OCI-LY7 (cell line): ENCODE measurements at regions of chr2 and their contacts with region 1.

Region 1: DNA sequence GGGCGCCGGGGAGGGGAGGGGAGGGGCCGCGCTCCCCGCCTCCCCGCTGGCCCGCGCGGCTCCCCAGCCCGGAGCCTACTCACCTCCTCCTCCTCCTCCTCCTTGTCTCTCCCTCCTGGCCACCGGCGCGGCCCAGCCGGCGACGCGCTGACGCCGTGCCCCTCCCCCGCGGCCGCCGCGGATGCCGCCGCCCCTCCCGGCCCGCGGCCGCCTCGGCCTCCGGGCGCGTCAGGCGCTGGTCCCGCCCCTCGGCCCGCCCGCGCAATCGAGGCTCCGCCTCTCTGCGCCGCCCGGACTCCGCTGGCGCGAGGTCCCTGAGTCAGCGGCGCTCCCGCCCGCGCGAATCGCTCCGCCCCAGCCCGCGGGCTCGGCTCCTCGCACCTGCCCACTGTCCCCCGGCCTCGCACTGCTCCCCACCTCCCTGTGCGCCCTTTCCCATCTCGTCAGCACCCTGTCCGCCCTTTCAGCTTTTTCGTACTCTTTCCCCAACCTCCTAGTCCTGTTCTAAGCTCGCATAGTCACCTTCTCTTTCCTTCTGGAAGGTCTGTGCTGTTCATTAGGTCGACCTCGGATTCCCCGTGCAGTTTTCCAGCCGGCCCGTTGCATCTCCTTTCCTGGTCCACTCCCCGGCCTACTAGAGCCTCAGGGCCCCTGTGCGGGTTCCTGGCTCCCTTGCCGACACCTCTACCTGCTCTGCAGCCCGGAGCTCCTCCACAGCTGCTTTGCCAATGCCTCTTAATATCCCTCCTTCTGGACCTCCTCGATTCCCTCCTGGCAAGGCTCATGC is 187.4 kb downstream of the ZEB2 start:
- DNase-seq: peak; percentile 93
- H3K4me3 ChIP-seq: peak overlapping the region; percentile 97
- H3K27ac ChIP-seq: peak overlapping the region; percentile 68
- H3K4me1 ChIP-seq: peaks cover 26% of the 10 kb centered on the region
- CTCF ChIP-seq: no peak

Region 2: GRCh38 chr2:143128681-143129580 is 1203.6 kb before region 1 on chr2 and contains the start of gene ARHGAP15:
- CTCF ChIA-PET with region 1: no interaction called
- POLR2A ChIA-PET with region 1: no interaction called
- intact Hi-C with region 1: loop called (anchors 10 kb)
- DNase-seq: peak; percentile 91
- H3K4me3 ChIP-seq: peak within 1 kb of the TSS; percentile 76
- H3K27ac ChIP-seq: peak within 1 kb of the TSS; percentile 97
- H3K4me1 ChIP-seq: peaks cover 37% of the 10 kb centered on the region
- CTCF ChIP-seq: peak; percentile 63; the same call in 1 of the 2 replicates
- total RNA-seq, gene ARHGAP15: 98.4 and 115 TPM in 2 replicates

Region 3: DNA sequence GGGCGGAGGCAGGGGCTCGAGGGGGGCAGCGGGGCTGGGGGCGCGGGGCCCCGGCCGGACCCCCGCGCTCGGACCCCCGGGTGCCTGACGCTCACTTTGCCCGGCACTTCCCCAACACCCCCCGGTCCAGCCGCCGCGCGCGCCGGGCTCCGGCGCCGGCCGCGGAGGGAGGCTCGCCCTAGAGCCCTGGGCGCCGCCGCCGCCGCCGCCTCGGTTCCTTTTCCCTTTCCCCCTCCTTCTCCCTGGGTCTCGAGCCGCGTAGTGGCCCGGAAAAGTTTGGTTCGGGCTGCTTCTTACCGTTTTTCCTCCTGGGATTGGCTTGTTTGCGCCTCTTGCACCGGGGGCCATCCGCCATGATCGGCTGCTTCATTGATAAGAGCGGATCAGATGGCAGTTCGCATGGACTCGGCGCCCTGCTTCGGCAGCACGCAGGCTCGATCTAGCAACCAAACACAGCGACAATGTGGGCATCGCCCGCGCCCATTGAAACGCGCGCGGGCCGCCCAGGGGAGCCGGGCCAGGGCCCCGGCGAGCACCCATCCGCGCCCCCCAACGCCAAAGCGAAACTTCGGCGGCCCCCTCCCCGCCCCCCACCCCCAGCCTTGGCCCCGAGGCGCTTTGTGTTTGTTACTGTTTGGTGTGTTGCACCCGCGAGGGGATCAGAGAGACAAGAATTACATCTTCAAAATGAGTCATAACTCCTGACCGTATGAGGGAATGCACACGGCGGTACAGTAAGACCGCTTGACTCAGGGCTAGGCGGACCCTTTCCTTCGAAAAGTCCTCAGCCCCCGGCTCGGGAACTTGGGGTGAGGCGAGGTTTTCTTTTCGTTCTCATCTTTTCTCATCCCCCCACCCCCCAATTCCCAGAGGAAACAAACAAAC is 184.7 kb after region 1 on chr2:
- CTCF ChIA-PET with region 1: no interaction called
- POLR2A ChIA-PET with region 1: no interaction called
- intact Hi-C with region 1: loop called (anchors 2 kb)
- DNase-seq: peak; percentile 64
- H3K4me3 ChIP-seq: peak overlapping the region; percentile 83
- H3K27ac ChIP-seq: no peak overlapping the region
- H3K4me1 ChIP-seq: peaks cover 36% of the 10 kb centered on the region
- CTCF ChIP-seq: no peak

Region 4: DNA sequence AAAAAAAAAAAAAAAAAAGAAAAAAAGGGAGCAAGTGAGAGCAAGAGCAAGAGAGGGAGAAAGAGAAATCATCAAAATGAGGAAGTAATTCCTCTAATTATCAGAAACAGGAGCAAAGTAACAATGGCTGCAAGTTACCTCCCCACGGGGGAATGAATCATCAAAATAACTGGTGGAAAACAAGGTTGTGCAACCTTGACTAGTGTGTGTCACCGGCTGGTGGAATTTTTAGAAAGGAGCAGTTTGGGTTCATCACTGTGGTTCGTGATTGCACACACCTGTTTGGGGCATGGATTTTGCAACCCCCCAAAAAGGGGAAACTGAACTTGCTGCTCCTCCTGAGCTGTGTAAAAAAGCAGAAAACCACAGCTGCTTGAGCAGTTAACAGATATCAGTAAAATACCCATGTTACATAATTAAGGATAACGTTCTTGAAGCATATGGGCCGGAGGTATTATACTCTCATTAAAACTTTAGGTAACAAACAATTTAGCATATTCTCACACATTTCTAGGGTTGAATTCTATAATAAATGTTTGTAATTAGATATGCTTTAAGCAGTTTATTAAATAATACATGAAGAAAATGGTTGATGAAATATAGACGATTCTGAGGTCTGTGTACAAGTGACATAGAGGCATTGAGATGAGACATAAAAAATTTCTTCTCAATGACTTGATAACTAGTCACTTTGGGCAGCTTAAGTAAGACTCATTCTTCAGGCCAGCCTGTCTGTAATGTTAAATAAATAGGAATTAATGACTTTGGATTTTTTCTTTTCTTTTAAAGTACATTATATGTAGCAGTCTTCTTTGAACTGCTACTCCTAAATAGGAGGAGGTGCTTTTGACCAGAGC is 371.5 kb after region 1 on chr2:
- CTCF ChIA-PET with region 1: no interaction called
- POLR2A ChIA-PET with region 1: no interaction called
- intact Hi-C with region 1: loop called (anchors 5 kb)
- DNase-seq: peak; percentile 97
- H3K4me3 ChIP-seq: peak overlapping the region; percentile 51
- H3K27ac ChIP-seq: peak overlapping the region; percentile 98
- H3K4me1 ChIP-seq: peaks cover 58% of the 10 kb centered on the region
- CTCF ChIP-seq: no peak

Region 5: GRCh38 chr2:145752091-145752806 is 1419.7 kb after region 1 on chr2:
- CTCF ChIA-PET with region 1: no interaction called
- POLR2A ChIA-PET with region 1: interaction called, 3 read pairs
- intact Hi-C with region 1: loop called (anchors 5 kb)
- DNase-seq: peak; percentile 79
- H3K4me3 ChIP-seq: peak overlapping the region; percentile 3
- H3K27ac ChIP-seq: peak overlapping the region; percentile 8
- H3K4me1 ChIP-seq: peaks cover 34% of the 10 kb centered on the region
- CTCF ChIP-seq: peak; percentile 90